Posterior vena cava (tissue), 2 donors: ENCODE measurements at regions of chr6 and their contacts with region 1.

Region 1: GRCh38 chr6:24394780-24395437 is 7.8 kb upstream of the MRS2 start:
- DNase-seq: no peak

Region 2: DNA sequence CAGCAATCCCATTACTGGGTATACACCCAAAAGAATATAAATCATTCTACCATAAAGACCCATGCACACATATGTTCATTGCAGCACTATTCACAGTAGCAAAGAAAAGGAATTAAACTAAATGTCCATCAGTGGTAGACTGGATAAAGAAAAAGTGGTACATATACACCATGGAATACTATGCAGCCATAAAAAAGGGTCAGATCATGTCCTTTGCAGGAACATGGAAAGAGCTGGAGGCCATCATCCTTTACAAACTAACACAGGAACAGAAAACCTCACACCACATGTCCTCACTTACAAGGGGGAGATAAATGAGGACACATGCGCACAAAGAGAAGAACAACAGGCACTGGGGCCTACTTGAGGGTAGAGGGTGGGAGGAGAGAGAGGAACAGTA is 98.0 kb before region 1 on chr6:
- intact Hi-C with region 1: no loop called
- DNase-seq: no peak

Region 3: DNA sequence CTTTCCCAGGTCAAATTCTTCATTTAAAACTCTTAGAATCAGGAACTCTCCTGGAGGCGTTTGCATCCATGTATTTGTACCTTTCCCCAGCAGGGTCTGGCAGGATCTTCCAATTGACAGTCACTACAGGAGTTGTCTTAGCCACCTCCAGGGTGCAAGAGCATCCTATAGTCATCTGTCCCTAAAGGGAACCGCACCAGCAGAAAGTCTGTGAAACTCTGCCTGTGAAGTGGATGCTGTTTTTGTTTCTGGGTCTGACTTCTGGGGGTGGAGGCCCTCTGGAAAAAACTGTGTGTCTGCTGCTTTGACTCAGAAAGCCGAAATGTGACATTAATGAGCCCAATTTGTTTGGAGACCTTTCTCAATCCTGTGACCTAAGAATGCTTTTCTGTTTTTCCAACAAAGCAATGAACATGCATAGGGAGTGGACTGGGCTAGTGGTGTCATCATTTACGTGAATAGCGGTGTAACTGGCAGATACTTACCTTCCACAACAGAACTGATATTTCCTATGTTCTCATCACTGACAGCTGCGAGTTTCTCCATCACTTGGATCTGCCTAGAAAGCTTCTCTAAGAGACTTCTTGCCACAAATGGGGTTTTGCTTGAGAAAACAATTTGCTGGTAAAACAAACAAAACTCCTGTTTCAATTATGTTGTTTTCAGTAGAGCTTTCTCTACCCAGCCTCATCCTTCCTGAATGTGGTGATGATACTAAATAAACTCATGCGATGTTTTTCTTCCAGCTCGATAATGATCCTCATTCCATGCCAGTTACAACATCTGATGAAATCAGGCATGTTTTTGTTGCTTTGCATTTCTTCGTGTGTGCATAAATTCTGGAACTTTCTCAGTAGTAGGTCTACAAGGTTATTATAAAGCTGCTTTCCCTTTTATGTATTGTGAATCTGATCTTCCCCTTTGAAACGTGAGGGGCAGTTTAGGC is 437.1 kb after region 1 on chr6:
- intact Hi-C with region 1: no loop called
- DNase-seq: no peak

Region 4: GRCh38 chr6:25542984-25543910 is 1148.3 kb after region 1 on chr6:
- intact Hi-C with region 1: loop called in 1 of 2 experiments (anchors 5 kb)
- DNase-seq: no peak